Aorta (tissue), 5 donors: ENCODE measurements at regions of chr15 and their contacts with region 1.

Region 1: GRCh38 chr15:88834211-88834812 is 31.1 kb downstream of the ACAN start:
- DNase-seq: peak; percentile 82 to 89
- ATAC-seq: peak; percentile 82
- H3K4me3 ChIP-seq: no peak overlapping the region
- H3K27ac ChIP-seq: peak overlapping the region in 1 of 2 donors; percentile 29
- H3K4me1 ChIP-seq: peaks cover 0 to 2% of the 10 kb centered on the region in 2 donors
- H3K27me3 ChIP-seq: no peaks in the 10 kb centered on the region

Region 2: GRCh38 chr15:88657326-88658069 is 176.8 kb before region 1 on chr15:
- intact Hi-C with region 1: loop called (anchors 1 kb)
- DNase-seq: peak; percentile 65 to 88
- ATAC-seq: peak; percentile 69
- H3K4me3 ChIP-seq: no peak overlapping the region
- H3K27ac ChIP-seq: no peak overlapping the region
- H3K4me1 ChIP-seq: peaks cover 0 to 13% of the 10 kb centered on the region in 2 donors
- H3K27me3 ChIP-seq: no peaks in the 10 kb centered on the region